Activated naive CD4-positive, alpha-beta T cell treated with anti-CD3 and anti-CD28 coated beads, Interleukin-2, amount 10 ng/mL, durations not matched to agents 7 days and 5 days (primary cell): ENCODE measurements at regions of chr2 and their contacts with region 1.

Region 1: GRCh38 chr2:72859831-72860262 is 27.4 kb upstream of the SPR start:
- DNase-seq: peak; percentile 74
- H3K4me3 Mint-ChIP-seq: no peak overlapping the region
- H3K27ac Mint-ChIP-seq: no peak overlapping the region
- H3K4me1 Mint-ChIP-seq: peaks cover 10% of the 10 kb centered on the region
- H3K27me3 Mint-ChIP-seq: peaks cover 69% of the 10 kb centered on the region

Region 2: DNA sequence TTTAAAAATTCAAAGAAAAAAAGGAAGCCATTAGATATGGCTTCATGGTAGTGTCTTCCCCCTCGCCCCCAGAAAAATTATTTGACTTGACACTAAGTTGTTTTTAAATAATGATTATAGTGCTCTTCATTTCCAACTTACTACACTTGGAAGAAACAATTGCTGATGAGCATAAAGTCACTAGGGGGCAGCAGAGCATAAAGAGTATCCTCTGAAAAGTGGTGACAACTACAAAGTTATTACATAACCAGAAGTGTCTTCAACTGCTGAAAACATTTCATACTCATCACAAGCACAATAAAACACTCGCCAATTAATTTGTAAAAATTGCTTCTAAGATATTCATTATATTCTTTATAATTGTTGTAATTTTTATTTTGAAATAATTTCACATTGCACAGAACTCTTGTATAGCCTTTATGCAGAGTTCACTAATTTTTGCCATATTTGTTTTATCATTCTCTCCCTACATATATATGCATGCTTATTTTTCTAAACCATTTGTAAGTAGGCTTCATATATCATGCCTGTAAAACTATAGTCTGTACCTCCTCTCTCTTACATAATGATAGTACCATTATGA is 88.9 kb before region 1 on chr2:
- CTCF ChIA-PET with region 1: interaction called, 16 read pairs
- DNase-seq: peak; percentile 71
- H3K4me3 Mint-ChIP-seq: no peak overlapping the region
- H3K27ac Mint-ChIP-seq: no peak overlapping the region
- H3K4me1 Mint-ChIP-seq: no peaks in the 10 kb centered on the region
- H3K27me3 Mint-ChIP-seq: no peaks in the 10 kb centered on the region